GM10248 (cell line): ENCODE measurements at regions of chr16 and their contacts with region 1.

Region 1: DNA sequence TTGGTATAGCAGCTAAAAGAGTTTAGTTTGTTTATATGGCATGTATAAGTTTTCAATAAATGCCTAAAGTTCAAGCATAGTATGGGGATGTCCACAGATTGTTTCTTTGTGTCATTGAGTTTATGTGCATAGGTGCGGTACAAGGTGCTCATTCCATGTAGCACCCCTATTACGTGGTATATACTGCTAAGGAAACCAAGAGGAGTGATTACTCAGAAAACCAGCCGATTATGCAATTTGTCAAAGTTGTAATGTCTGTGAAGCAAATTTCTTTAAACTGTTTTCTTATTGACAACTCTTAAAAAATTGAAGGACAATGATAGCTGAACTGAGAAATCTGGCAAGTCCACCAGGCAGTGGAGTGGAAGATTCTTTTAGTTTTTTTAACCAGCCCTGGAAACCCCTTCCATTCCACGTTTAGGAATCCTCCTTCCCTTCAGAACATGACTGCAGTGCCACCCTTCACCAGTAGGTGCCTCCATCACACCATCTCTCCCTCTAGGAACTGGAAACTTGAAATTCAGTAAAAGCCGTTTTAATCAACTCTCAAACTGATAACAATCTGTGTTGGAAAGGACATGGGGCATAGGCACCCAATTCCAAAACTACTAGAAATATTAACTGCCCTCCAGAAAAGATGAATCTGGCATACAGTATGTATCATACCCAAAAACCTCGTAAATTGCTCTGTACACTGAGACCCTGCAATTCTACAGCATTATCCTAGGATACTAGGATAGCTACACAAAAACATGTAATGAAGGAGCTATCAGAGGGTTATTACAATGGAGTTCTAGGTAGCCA is 43.5 kb downstream of the REXO5 start:
- DNase-seq: peak; percentile 35
- CTCF ChIP-seq: peak; percentile 99

Region 2: GRCh38 chr16:20726661-20727060 is 123.1 kb before region 1 on chr16:
- CTCF ChIA-PET with region 1: no interaction called
- POLR2A ChIA-PET with region 1: no interaction called
- DNase-seq: no peak
- CTCF ChIP-seq: no peak

Region 3: GRCh38 chr16:20826039-20826566 is 23.7 kb before region 1 on chr16:
- CTCF ChIA-PET with region 1: interaction called, 25 read pairs
- POLR2A ChIA-PET with region 1: no interaction called
- DNase-seq: no peak
- CTCF ChIP-seq: no peak

Region 4: DNA sequence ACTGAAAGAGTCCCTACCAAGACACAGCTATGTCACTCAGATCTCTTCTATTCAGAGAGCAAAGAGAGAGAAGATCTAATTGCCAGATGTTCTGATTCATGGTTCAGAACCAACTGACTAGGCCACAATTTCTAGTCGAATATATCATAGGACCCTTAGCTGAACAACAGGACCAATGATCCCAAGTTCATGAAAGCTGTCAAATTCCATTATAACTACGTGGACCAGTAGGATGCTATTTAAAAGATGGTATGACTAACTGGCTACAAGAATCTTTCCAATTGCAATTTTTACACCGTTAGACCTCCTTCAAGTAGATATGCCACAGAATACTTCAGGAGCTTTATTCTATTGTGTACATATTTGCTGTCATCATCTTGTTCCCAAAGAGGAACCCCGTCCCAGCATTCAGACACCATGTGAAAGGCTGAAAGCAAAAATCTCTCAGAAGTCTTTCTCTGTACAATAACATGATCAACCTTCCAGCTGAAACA is 24.3 kb after region 1 on chr16:
- CTCF ChIA-PET with region 1: interaction called, 15 read pairs
- POLR2A ChIA-PET with region 1: no interaction called
- DNase-seq: no peak
- CTCF ChIP-seq: no peak

Region 5: DNA sequence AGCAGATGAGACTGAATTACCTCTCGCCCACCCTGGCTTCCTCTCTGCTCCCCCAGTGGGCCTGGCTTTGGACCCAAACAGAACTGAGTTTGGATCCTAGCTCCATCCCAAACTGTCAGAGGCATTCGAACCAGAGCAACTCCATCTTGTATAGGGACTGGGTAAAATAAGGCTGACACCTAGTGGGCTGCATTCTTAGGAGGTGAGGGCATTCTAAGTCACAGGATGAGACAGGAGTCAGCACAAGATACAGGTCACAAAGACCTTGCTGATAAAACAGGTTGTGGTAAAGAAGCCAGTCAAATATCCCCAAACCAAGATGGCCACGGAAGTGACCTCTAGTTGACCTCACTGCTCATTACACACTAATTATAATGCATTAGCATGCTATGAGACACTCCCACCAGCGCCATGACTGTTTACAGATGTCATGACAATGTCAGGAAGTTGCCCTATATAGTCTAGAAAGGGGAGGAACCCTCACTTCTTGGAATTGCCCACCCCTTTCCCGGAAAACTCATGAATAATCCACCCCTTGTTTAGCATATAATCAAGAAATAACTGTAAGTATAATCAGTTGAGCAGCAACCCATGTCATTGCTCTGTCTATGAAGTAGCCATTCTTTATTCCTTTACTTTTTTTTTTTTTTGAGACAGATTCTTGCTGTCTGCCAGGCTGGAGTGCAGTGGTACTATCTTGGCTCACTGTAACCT is 95.2 kb after region 1 on chr16:
- CTCF ChIA-PET with region 1: interaction called, 11 read pairs
- POLR2A ChIA-PET with region 1: no interaction called
- DNase-seq: no peak
- CTCF ChIP-seq: peak; percentile 8

Region 6: DNA sequence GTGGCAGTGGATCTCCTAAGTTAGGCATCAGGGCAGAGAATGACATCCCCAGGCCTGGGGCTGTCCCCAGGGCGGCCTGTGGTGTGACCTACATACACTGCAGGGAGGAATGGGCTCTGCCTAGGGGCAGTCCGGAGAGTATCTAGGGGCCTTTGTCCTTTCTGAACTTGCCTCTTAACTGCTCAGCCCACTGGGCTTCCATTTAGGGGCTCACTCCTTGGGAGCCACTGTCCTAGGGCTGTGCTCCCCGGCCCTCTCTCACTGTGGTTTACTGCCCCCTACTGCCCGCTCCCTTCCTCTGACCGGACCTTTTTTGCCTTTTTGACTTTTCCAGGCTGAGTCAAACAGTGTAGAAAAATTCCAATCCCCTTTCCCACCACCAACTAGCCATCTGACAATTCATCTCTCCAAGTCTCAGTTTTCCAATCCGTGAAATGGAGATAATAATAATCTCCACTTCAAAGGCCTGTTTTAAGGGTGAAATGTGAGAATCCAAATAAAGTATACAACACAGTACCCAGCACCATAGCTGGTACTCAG is 234.0 kb after region 1 on chr16:
- CTCF ChIA-PET with region 1: interaction called, 99 read pairs
- POLR2A ChIA-PET with region 1: no interaction called
- DNase-seq: peak; percentile 54
- CTCF ChIP-seq: peak; percentile 71